GM12878 (cell line): ENCODE measurements at regions of chr4 and their contacts with region 1.

Region 1: DNA sequence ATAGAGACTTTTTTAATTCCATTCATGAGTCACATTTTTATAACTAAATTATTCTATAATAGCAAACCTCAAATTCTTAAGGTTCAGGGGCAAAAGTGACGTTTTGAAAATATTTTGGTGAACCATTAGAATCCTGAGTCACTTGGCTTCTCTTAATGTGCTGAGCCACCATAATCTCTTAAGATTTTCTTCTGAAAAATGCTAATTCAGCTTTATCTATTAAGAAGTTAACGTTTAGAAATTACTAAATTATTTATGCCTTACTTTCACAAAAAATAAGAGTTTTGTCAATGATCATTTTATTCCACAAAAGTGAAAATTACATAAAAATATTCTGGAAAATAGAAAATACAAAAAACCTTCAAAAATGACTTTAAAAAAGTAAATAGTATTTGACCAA is 72.5 kb downstream of the GPM6A start:
- DNase-seq: no peak
- ATAC-seq: no peak
- H3K4me3 ChIP-seq: no peak overlapping the region
- H3K27ac ChIP-seq: no peak overlapping the region
- H3K4me1 ChIP-seq: no peaks in the 10 kb centered on the region
- H3K27me3 ChIP-seq: no peaks in the 10 kb centered on the region
- CTCF ChIP-seq: no peak
- EP300 ChIP-seq: no peak
- POLR2A ChIP-seq: no peak
- RAD21 ChIP-seq: no peak

Region 2: GRCh38 chr4:175691791-175692190 is 47.8 kb before region 1 on chr4:
- CTCF ChIA-PET with region 1: no interaction called
- POLR2A ChIA-PET with region 1: no interaction called
- RAD21 ChIA-PET with region 1: no interaction called
- SMC1A ChIA-PET with region 1: no interaction called
- in situ Hi-C with region 1: no loop called
- intact Hi-C with region 1: no loop called
- DNase-seq: no peak
- ATAC-seq: no peak
- H3K4me3 ChIP-seq: no peak overlapping the region
- H3K27ac ChIP-seq: no peak overlapping the region
- H3K4me1 ChIP-seq: no peaks in the 10 kb centered on the region
- H3K27me3 ChIP-seq: no peaks in the 10 kb centered on the region
- CTCF ChIP-seq: no peak
- EP300 ChIP-seq: no peak
- POLR2A ChIP-seq: no peak
- RAD21 ChIP-seq: no peak

Region 3: DNA sequence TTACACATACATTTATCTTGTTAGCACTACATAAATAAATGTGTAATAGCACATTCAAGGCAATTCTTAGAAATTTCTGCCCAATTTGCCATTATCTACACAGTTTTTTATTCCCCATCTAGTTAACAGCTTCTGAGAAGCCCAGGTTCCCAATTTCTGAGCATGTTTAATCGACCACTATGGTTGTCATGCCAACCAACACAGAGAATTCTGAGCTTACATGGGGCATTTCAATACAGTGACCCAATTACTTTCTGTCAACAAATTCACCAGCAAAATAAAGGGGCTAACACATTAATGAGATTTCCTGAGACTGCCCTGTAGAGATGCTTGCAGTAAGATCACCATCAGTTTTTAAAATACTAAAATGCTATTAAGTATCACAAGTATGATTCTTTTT is 50.5 kb after region 1 on chr4:
- CTCF ChIA-PET with region 1: no interaction called
- POLR2A ChIA-PET with region 1: no interaction called
- RAD21 ChIA-PET with region 1: no interaction called
- SMC1A ChIA-PET with region 1: no interaction called
- in situ Hi-C with region 1: loop called (anchors 10 kb)
- intact Hi-C with region 1: no loop called
- DNase-seq: no peak
- ATAC-seq: no peak
- H3K4me3 ChIP-seq: no peak overlapping the region
- H3K27ac ChIP-seq: no peak overlapping the region
- H3K4me1 ChIP-seq: no peaks in the 10 kb centered on the region
- H3K27me3 ChIP-seq: no peaks in the 10 kb centered on the region
- CTCF ChIP-seq: no peak
- EP300 ChIP-seq: no peak
- POLR2A ChIP-seq: no peak
- RAD21 ChIP-seq: no peak